Breast epithelium (tissue), 4 donors: ENCODE measurements at regions of chr2 and their contacts with region 1.

Region 1: GRCh38 chr2:118103951-118104940 is 16.0 kb downstream of the INSIG2 start:
- DNase-seq: no peak
- H3K4me3 ChIP-seq: no peak overlapping the region
- H3K27ac ChIP-seq: no peak overlapping the region
- H3K4me1 ChIP-seq: no peaks in the 10 kb centered on the region
- H3K27me3 ChIP-seq: no peaks in the 10 kb centered on the region
- CTCF ChIP-seq: no peak
- POLR2A ChIP-seq: no peak

Region 2: GRCh38 chr2:117814417-117815264 is 289.6 kb before region 1 on chr2 and contains the start of gene DDX18:
- intact Hi-C with region 1: loop called (anchors 10 kb)
- DNase-seq: peak; percentile 94 to 95
- H3K4me3 ChIP-seq: peak within 1 kb of the TSS; percentile 72 to 96 (median 87)
- H3K27ac ChIP-seq: peak within 1 kb of the TSS; percentile 89 to 90
- H3K4me1 ChIP-seq: peaks cover 0 to 13% of the 10 kb centered on the region in 2 donors
- H3K27me3 ChIP-seq: no peaks in the 10 kb centered on the region
- CTCF ChIP-seq: peak; percentile 91 to 99 (median 98)
- POLR2A ChIP-seq: no peak
- total RNA-seq, gene DDX18: 46.1 to 63.7 (median 50.8) TPM